ENCODE measurements at regions of chr7 and their contacts with region 1.

Region 1: DNA sequence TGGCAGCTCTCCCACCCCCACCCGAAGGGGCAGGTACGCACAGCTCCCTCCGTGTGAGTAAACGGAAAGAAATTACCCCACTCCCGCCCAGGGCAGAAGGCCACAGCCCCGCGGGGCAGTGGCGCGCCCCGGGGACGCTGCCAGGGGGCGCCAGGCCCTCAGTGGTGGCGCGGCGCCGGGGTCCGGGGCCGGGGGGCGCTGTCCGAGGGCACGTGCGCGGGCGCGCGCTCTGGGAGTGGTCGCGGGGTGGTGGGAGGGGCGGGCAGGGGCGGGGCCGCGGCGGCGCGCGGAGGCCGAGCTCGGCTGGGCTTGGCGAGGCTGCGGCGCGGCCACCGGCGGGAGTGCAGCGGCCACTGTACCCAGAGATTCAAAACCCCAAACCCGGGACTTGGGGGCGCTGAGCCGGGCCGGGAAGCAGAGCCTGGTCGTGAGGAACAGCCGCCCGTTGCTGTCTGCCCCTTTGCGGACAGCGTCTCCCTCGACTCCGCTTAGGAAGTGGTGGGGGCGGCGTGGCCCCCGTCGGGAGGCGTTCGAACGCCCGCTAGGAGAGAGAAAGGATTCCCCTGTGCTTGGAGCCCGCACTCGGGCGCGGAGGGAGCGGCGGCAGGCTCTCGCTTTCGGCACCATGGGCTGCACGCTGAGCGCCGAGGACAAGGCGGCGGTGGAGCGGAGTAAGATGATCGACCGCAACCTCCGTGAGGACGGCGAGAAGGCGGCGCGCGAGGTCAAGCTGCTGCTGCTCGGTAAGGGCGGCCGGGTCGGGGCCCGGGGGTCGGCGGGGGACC is at the start of gene GNAI1:
- DNase-seq: no peak
- H3K4me3 ChIP-seq: peak within 1 kb of the TSS; percentile 86 to 98 (median 92)
- H3K27ac ChIP-seq: peak within 1 kb of the TSS; percentile 95 to 96 (median 96)
- H3K4me1 ChIP-seq: peaks cover 5 to 48% (median 45%) of the 10 kb centered on the region in 4 donors
- H3K27me3 ChIP-seq: no peaks in the 10 kb centered on the region
- CTCF ChIP-seq: peak; percentile 48 to 56 (median 49)
- EP300 ChIP-seq: no peak
- POLR2A ChIP-seq: peak; percentile 19
- total RNA-seq, gene GNAI1: 61.0 to 141 (median 75.5) TPM

Region 2: GRCh38 chr7:80039251-80039884 is 95.4 kb before region 1 on chr7:
- intact Hi-C with region 1: no loop called
- DNase-seq: no peak
- H3K4me3 ChIP-seq: no peak overlapping the region
- H3K27ac ChIP-seq: no peak overlapping the region
- H3K4me1 ChIP-seq: peaks cover 0 to 8% (median 0%) of the 10 kb centered on the region in 4 donors
- H3K27me3 ChIP-seq: no peaks in the 10 kb centered on the region
- CTCF ChIP-seq: no peak
- EP300 ChIP-seq: no peak
- POLR2A ChIP-seq: no peak

Region 3: GRCh38 chr7:80095545-80095944 is 39.2 kb before region 1 on chr7:
- intact Hi-C with region 1: loop called (anchors 5 kb)
- DNase-seq: no peak
- H3K4me3 ChIP-seq: no peak overlapping the region
- H3K27ac ChIP-seq: no peak overlapping the region
- H3K4me1 ChIP-seq: peaks cover 0 to 10% (median 0%) of the 10 kb centered on the region in 4 donors
- H3K27me3 ChIP-seq: no peaks in the 10 kb centered on the region
- CTCF ChIP-seq: peak; percentile 60 to 64 (median 63)
- EP300 ChIP-seq: no peak
- POLR2A ChIP-seq: no peak

Region 4: DNA sequence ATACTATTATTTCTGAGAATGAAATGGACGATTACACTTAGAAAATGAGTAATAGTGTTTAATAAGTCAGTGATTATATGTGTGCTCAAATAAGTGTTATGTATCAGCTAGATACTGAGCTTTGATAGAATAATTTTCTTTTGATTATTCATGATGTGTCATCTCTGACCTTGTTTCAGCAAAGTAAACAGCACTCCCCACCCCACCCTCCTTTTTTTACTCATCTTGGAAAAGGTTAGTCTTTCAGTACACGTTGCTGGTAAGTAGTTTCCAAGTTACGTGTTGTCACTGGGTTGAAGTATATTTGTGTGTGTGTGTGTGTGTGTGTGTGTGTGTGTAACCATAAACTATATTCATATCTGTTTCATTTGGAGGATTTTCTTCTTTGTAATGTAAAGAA is 84.0 kb after region 1 on chr7:
- intact Hi-C with region 1: loop called (anchors 10 kb)
- DNase-seq: no peak
- H3K4me3 ChIP-seq: no peak overlapping the region
- H3K27ac ChIP-seq: no peak overlapping the region
- H3K4me1 ChIP-seq: peaks cover 0 to 21% (median 8%) of the 10 kb centered on the region in 4 donors
- H3K27me3 ChIP-seq: no peaks in the 10 kb centered on the region
- CTCF ChIP-seq: no peak
- EP300 ChIP-seq: no peak
- POLR2A ChIP-seq: no peak

Region 5: GRCh38 chr7:80392229-80393169 is 257.8 kb after region 1 on chr7:
- intact Hi-C with region 1: loop called (anchors 2 kb)
- DNase-seq: no peak
- H3K4me3 ChIP-seq: no peak overlapping the region
- H3K27ac ChIP-seq: no peak overlapping the region
- H3K4me1 ChIP-seq: peaks cover 0 to 5% (median 2%) of the 10 kb centered on the region in 4 donors
- H3K27me3 ChIP-seq: no peaks in the 10 kb centered on the region
- CTCF ChIP-seq: peak; percentile 57 to 73 (median 65)
- EP300 ChIP-seq: no peak
- POLR2A ChIP-seq: no peak

Measured in esophagus muscularis mucosa (tissue), 4 donors.